CD8-positive, alpha-beta T cell (primary cell): ENCODE measurements at regions of chr3 and their contacts with region 1.

Region 1: DNA sequence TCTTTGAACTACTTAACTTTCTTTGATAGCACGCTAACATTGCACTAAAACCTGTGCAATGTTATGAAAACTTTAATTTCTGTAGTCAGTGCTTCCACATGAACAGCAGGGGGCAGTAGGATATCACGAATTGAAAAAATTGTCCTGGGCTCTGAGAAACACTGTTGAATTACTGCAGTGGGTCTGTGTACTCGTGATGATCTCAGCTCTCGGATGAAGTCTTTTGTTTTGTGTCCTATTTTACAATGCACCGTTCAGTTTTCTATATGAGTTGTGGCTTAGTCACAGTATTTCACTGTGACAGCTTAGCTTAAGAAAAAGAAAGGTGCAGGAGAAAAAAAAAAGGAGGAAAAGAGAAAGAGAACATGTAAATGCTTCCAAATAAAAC is 141.3 kb upstream of the CCDC54 start:
- DNase-seq: peak; percentile 6 to 82 (median 41)
- ATAC-seq: peak; percentile 69
- H3K4me3 ChIP-seq: peak overlapping the region in 1 of 2 experiments; percentile 20
- H3K4me3 Mint-ChIP-seq: peak overlapping the region; percentile 65
- H3K27ac ChIP-seq: no peak overlapping the region
- H3K27ac Mint-ChIP-seq: no peak overlapping the region
- H3K4me1 ChIP-seq: peaks cover 4% of the 10 kb centered on the region
- H3K4me1 Mint-ChIP-seq: peaks cover 17% of the 10 kb centered on the region
- H3K27me3 ChIP-seq: no peaks in the 10 kb centered on the region
- H3K27me3 Mint-ChIP-seq: peaks cover 6% of the 10 kb centered on the region
- CTCF ChIP-seq: peak; percentile 98

Region 2: DNA sequence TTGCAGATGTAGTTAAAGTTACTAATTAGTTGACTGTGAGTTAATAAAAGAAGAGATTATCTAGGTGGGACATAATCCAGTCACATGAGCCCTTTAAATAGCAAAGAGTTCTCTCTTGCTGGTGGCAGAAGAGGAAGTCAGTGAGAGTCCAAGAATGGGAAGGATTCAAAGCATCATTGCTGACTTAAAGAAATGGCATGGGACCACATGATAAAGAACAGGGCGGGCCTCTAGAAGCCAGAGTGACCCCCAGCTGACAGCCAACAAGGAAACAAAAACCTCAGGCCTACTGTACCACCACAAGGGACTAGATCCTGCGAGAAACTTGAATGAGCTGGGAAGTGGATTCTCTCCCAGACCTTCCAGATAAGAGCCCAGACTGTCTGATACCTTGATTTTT is 305.8 kb before region 1 on chr3:
- CTCF ChIA-PET with region 1: no interaction called
- POLR2A ChIA-PET with region 1: no interaction called
- intact Hi-C with region 1: no loop called
- DNase-seq: no peak
- ATAC-seq: no peak
- H3K4me3 ChIP-seq: no peak overlapping the region
- H3K4me3 Mint-ChIP-seq: no peak overlapping the region
- H3K27ac ChIP-seq: no peak overlapping the region
- H3K27ac Mint-ChIP-seq: no peak overlapping the region
- H3K4me1 ChIP-seq: no peaks in the 10 kb centered on the region
- H3K4me1 Mint-ChIP-seq: no peaks in the 10 kb centered on the region
- H3K27me3 ChIP-seq: no peaks in the 10 kb centered on the region
- H3K27me3 Mint-ChIP-seq: no peaks in the 10 kb centered on the region
- CTCF ChIP-seq: no peak

Region 3: GRCh38 chr3:107421170-107421792 is 185.4 kb after region 1 on chr3:
- CTCF ChIA-PET with region 1: interaction called, 47 read pairs
- POLR2A ChIA-PET with region 1: no interaction called
- intact Hi-C with region 1: loop called (anchors 1 to 2 kb)
- DNase-seq: peak in 2 of 9 experiments; percentile 57 to 71
- ATAC-seq: peak; percentile 49
- H3K4me3 ChIP-seq: no peak overlapping the region
- H3K4me3 Mint-ChIP-seq: peak overlapping the region; percentile 57
- H3K27ac ChIP-seq: no peak overlapping the region
- H3K27ac Mint-ChIP-seq: no peak overlapping the region
- H3K4me1 ChIP-seq: no peaks in the 10 kb centered on the region
- H3K4me1 Mint-ChIP-seq: peaks cover 3% of the 10 kb centered on the region
- H3K27me3 ChIP-seq: peaks cover 0 to 5% of the 10 kb centered on the region in 2 experiments
- H3K27me3 Mint-ChIP-seq: peaks cover 7% of the 10 kb centered on the region
- CTCF ChIP-seq: no peak

Region 4: DNA sequence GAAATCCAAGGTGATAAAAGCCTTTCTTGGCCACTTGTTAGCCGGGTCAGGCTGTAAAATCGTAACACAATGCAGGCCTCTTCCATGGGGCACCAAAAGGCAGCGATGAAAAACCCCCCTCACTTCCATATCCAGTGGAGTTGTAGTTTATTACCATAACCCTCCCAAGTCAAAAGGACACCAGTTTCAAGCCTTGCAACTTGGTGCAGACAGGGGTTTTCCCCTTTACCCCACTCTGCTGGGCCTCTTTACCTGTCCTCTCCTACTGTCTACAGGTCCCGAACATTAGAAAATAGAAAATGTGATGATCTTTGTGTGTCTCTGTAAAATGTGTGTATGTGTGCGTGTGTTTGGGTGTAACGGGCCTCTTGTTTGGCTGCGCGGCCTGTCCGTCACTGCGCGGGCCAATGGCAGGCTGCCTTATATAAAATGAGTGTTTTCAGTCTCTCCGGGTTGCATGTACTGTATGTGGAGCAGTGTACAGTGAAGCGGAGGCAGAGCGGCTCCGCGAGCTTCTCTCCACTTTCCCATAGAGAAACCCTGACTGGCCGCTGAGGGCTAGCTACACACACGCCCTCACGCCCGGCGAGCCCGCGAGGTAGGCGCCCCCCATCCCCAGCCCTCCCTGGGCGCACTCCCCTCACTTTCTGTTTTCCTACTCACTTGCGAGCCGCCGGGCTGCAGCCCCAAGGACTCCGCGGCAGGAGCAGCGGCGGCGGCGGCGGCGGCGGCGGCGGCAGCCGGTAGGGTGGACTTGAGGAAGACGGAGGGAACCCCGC is 286.8 kb after region 1 on chr3 and contains the start of gene BBX:
- CTCF ChIA-PET with region 1: interaction called, 3 read pairs
- POLR2A ChIA-PET with region 1: no interaction called
- intact Hi-C with region 1: loop called (anchors 5 kb)
- DNase-seq: peak; percentile 83 to 98 (median 91)
- ATAC-seq: peak; percentile 91
- H3K4me3 ChIP-seq: peak within 1 kb of the TSS; percentile 77 to 86
- H3K4me3 Mint-ChIP-seq: peak within 1 kb of the TSS; percentile 99
- H3K27ac ChIP-seq: peak within 1 kb of the TSS; percentile 47 to 69
- H3K27ac Mint-ChIP-seq: peak within 1 kb of the TSS; percentile 99
- H3K4me1 ChIP-seq: peaks cover 19% of the 10 kb centered on the region
- H3K4me1 Mint-ChIP-seq: peaks cover 32% of the 10 kb centered on the region
- H3K27me3 ChIP-seq: no peaks in the 10 kb centered on the region
- H3K27me3 Mint-ChIP-seq: no peaks in the 10 kb centered on the region
- CTCF ChIP-seq: no peak
- total RNA-seq, gene BBX: 71.3 to 77.9 TPM

Region 5: DNA sequence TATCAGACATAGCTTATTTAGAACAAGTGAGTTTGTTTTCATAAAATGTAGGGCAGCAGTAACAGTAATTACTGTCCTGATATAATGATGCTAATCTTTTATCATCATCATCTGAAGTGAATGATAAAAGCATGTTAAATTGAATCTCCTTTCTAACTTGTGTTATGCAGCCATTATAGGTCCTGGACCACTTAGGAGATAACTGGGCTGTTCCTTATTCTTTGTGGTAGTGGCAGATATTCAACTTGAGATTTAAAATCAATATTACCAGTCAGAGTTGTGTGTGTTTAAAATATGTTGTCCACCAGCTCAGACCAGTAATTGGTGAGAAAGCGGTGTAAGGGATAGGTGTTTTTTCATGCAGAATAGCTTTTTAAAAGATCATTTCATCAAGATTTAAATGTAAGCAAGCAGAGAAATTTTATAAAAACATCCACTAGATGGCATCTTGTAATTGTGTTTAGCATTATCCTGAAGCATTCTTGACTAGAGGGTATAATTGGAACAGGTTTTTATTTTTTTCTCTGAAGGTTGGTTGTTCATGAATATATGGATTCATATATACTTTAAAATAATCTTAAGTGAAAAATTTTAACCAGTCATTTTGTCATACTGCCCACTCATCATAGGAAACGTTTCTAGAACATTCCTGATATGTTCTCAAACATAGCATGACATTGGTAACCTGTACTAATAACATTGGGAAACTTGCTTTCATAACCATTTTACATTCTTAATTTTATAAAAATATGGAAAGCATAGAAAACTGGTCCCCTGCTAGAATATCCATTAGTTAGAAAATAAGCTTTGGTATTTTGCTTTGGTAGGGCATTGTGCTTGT is 440.8 kb after region 1 on chr3:
- CTCF ChIA-PET with region 1: interaction called, 15 read pairs
- POLR2A ChIA-PET with region 1: no interaction called
- intact Hi-C with region 1: loop called in 1 of 2 experiments (anchors 5 kb)
- DNase-seq: peak in 2 of 9 experiments; percentile 24 to 49
- ATAC-seq: peak; percentile 54
- H3K4me3 ChIP-seq: no peak overlapping the region
- H3K4me3 Mint-ChIP-seq: no peak overlapping the region
- H3K27ac ChIP-seq: no peak overlapping the region
- H3K27ac Mint-ChIP-seq: peak overlapping the region; percentile 58
- H3K4me1 ChIP-seq: no peaks in the 10 kb centered on the region
- H3K4me1 Mint-ChIP-seq: peaks cover 41% of the 10 kb centered on the region
- H3K27me3 ChIP-seq: no peaks in the 10 kb centered on the region
- H3K27me3 Mint-ChIP-seq: no peaks in the 10 kb centered on the region
- CTCF ChIP-seq: peak; percentile 74

Region 6: DNA sequence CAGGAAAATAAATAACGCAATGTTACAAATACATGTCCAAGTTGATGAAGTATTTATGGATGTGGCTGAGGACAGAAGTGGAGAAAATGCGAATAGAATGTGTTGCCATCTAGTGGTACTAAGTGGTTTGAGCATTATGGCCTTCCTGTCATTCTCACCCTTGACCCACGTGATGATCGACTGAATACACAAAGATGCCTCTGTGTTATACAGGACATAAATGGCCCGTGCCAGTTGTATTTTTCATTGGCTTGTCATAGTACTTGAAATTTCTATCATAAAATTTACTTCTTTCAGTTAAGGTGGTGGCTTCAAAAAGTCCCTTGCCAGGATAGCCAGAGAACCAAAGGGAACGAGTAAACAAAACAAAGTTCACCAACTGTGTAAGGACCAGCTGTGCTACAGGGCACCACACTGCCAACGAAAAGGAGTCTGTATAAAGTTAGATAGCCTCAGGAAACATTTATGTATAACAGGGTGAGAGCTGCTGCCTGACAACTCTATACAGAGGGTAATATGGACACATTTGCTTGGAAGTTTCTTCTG is 1170.8 kb after region 1 on chr3:
- CTCF ChIA-PET with region 1: interaction called, 4 read pairs
- POLR2A ChIA-PET with region 1: no interaction called
- intact Hi-C with region 1: loop called in 1 of 2 experiments (anchors 2 kb)
- DNase-seq: peak in 3 of 9 experiments; percentile 22 to 78 (median 55)
- ATAC-seq: peak; percentile 79
- H3K4me3 ChIP-seq: no peak overlapping the region
- H3K4me3 Mint-ChIP-seq: no peak overlapping the region
- H3K27ac ChIP-seq: no peak overlapping the region
- H3K27ac Mint-ChIP-seq: no peak overlapping the region
- H3K4me1 ChIP-seq: no peaks in the 10 kb centered on the region
- H3K4me1 Mint-ChIP-seq: peaks cover 3% of the 10 kb centered on the region
- H3K27me3 ChIP-seq: no peaks in the 10 kb centered on the region
- H3K27me3 Mint-ChIP-seq: no peaks in the 10 kb centered on the region
- CTCF ChIP-seq: peak; percentile 40

Region 7: GRCh38 chr3:108914774-108915641 is 1679.1 kb after region 1 on chr3:
- CTCF ChIA-PET with region 1: no interaction called
- POLR2A ChIA-PET with region 1: no interaction called
- intact Hi-C with region 1: loop called in 1 of 2 experiments (anchors 10 kb)
- DNase-seq: peak; percentile 13 to 82 (median 58)
- ATAC-seq: peak; percentile 96
- H3K4me3 ChIP-seq: no peak overlapping the region
- H3K4me3 Mint-ChIP-seq: no peak overlapping the region
- H3K27ac ChIP-seq: no peak overlapping the region
- H3K27ac Mint-ChIP-seq: no peak overlapping the region
- H3K4me1 ChIP-seq: no peaks in the 10 kb centered on the region
- H3K4me1 Mint-ChIP-seq: peaks cover 12% of the 10 kb centered on the region
- H3K27me3 ChIP-seq: no peaks in the 10 kb centered on the region
- H3K27me3 Mint-ChIP-seq: peaks cover 4% of the 10 kb centered on the region
- CTCF ChIP-seq: peak; percentile 89